ENCODE measurements at regions of chr3 and their contacts with region 1.

Region 1: GRCh38 chr3:37067577-37067976 is 74.3 kb downstream of the MLH1 start:
- DNase-seq: no peak

Region 2: GRCh38 chr3:37107846-37108245 is 40.3 kb after region 1 on chr3:
- intact Hi-C with region 1: loop called in 1 of 2 experiments (anchors 2 kb)
- DNase-seq: no peak